Head of caudate nucleus (tissue), 42 donors: ENCODE measurements at regions of chr19 and their contacts with region 1.

Region 1: GRCh38 chr19:46392243-46392801 is 21.0 kb downstream of the CCDC8 start:
- DNase-seq: peak in 2 of 42 donors; percentile 23 to 31

Region 2: DNA sequence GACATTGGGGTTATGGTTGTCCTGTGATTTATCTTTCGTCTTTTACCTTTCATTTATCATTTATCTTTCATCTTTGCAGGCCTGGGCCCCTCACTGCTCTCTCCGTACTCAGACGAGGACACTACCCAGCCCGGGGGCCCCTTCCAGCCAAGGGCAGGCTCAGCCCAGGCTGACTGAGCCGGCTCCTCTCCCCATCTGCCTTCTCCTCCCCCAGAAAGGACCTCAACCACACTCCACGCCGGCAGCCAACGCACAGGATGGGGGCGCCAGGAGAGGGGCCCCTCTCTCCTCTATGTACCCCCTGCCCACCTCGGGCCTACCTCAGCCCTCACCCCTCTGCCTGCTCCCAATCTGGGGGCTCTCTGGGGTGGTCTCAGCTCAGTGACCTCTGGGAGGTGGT is 52.9 kb before region 1 on chr19:
- intact Hi-C with region 1: no loop called
- DNase-seq: no peak

Region 3: GRCh38 chr19:46487802-46488445 is 95.6 kb after region 1 on chr19:
- intact Hi-C with region 1: loop called (anchors 1 kb)
- DNase-seq: peak; percentile 73 to 95 (median 87)

Region 4: GRCh38 chr19:46513461-46514236 is 121.3 kb after region 1 on chr19:
- intact Hi-C with region 1: no loop called
- DNase-seq: peak in 41 of 42 donors; percentile 53 to 95 (median 87)